Esophagus muscularis mucosa (tissue), 4 donors: ENCODE measurements at regions of chr15 and their contacts with region 1.

Region 1: GRCh38 chr15:25508369-25509002 is 69.7 kb upstream of the UBE3A start:
- DNase-seq: no peak
- H3K4me3 ChIP-seq: no peak overlapping the region
- H3K27ac ChIP-seq: no peak overlapping the region
- H3K4me1 ChIP-seq: peaks cover 0 to 27% (median 3%) of the 10 kb centered on the region in 4 donors
- H3K27me3 ChIP-seq: no peaks in the 10 kb centered on the region
- CTCF ChIP-seq: peak; percentile 73 to 80 (median 75)
- EP300 ChIP-seq: no peak
- POLR2A ChIP-seq: no peak

Region 2: DNA sequence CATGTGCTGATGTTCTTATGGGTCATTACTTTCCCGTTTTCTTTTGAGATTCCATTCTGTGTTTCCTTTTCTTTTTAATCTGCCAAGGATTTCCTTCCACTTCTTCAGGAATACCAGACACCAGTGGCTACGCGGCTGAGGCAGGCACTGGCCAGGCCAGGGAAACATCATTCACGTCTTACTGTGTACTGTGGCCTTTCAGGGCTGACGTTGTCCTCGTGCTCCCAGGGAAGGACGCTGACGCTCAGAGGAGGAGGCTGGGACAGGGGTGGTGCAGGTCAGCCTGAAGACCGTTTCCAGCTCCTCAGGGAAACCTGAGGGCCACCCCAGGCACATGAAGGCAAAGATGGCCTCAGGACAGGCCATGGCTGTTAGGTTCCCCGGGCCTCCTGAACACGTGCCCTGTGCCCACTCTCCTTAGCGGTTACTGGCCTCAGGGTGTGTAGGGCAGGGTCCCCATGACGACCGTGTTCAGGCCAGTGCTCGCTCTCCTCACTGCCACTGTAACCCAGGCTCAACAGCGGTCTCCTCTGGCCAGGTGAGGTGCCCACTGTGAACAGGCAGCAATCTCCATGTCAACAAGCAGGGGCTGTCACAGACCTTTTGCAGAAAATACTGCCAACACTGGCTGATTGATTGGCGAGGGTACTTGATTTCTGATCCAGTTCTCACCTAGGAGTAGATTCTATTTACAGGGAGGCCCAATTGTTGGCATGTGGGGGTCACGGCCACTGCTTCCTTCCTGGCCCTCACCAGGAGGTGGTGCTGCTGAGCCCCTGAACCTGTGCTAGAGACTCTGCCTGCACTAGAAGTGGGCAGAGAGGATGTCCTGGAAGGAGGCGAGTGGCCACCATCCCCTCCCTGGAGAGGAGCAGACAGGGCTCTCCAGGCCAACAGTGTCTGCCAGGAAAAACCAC is 185.1 kb after region 1 on chr15:
- intact Hi-C with region 1: loop called (anchors 2 kb)
- DNase-seq: no peak
- H3K4me3 ChIP-seq: no peak overlapping the region
- H3K27ac ChIP-seq: peak overlapping the region in 1 of 4 donors; percentile 34
- H3K4me1 ChIP-seq: peaks cover 0 to 37% (median 19%) of the 10 kb centered on the region in 4 donors
- H3K27me3 ChIP-seq: no peaks in the 10 kb centered on the region
- CTCF ChIP-seq: peak; percentile 64 to 74 (median 72)
- EP300 ChIP-seq: no peak
- POLR2A ChIP-seq: no peak

Region 3: DNA sequence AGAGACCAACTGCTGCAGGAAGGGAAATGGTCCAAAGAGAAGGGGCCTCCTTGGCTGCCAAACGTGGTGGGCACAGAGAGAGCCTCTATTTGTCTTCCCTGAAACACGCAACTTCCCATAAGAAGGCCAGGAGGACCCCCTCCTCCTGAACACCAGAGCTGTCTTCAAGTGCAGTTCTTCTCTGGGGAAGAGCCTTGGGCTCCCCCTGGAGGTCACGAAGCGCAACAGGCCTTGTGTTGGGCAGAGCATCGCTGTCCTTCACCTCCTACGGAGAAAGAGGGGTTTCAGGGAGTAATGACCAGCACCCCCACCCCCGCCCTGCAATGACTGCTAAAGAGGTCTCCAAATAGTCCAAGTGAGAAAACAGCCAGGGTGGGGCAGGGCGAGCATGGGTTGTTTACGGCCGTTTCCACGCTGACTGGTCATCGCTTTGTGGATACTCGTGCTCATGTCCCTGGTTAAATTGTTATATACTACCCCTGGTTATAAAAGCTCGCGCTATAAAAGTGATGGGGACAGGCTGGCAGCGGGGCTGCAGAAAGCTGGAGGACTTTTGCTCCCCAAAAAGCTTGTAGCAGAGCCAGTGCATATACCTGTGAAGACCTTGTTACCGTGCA is 752.1 kb after region 1 on chr15:
- intact Hi-C with region 1: loop called (anchors 10 kb)
- DNase-seq: no peak
- H3K4me3 ChIP-seq: no peak overlapping the region
- H3K27ac ChIP-seq: no peak overlapping the region
- H3K4me1 ChIP-seq: peaks cover 0 to 12% (median 9%) of the 10 kb centered on the region in 4 donors
- H3K27me3 ChIP-seq: no peaks in the 10 kb centered on the region
- CTCF ChIP-seq: peak; percentile 45 to 69 (median 45)
- EP300 ChIP-seq: no peak
- POLR2A ChIP-seq: no peak